H1 (cell line): ENCODE measurements at regions of chr3 and their contacts with region 1.

Region 1: GRCh38 chr3:128123538-128124368 is at the start of gene RUVBL1:
- DNase-seq: peak; percentile 90 to 94
- H3K4me3 ChIP-seq: peak within 1 kb of the TSS; percentile 93 to 96 (median 95)
- H3K27ac ChIP-seq: peak within 1 kb of the TSS; percentile 95
- H3K4me1 ChIP-seq: no peaks in the 10 kb centered on the region; a peak in 2 of 7 replicates
- H3K27me3 ChIP-seq: peaks cover 0 to 4% (median 0%) of the 10 kb centered on the region in 4 experiments; a peak in 1 of 7 replicates
- CTCF ChIP-seq: no peak
- EP300 ChIP-seq: no peak
- POLR2A ChIP-seq: peak; percentile 85 to 90
- RAD21 ChIP-seq: no peak
- total RNA-seq, gene RUVBL1: 131 and 135 TPM in 2 replicates

Region 2: DNA sequence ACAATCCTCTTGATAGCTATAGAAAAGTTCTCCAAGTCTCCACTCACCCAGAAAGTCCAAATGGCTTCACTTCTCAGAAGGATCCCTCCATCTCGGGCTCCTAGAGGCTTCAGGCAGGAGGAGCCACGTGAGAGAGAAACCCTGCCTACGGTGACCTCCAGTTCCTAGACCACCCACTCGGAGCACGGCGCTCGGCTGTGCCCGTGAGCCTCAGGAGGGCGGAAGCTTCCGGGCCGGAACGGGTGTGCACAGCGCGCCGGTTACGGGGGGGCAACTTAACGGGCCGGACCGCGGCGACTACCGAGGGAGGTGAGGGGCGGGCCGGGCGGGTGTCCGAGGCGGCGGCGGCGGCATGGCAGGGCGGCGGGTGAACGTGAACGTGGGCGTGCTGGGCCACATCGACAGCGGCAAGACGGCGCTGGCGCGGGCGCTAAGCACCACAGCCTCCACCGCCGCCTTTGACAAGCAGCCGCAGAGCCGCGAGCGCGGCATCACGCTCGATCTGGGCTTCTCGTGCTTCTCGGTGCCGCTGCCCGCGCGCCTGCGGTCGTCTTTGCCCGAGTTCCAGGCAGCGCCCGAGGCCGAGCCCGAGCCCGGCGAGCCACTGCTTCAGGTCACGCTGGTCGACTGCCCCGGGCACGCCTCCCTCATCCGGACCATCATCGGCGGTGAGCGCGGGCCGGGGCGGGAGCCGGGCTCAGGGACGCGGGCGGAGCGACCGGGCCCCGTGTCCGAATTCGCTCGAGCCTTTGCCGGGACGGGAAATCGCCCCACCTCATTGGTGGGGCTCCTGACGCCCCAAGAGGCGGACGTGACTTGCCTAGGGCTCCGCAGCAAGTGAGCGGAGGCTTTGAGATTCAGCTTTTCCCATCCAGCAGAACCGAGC is 29.6 kb after region 1 on chr3 and contains the start of gene EEFSEC:
- CTCF ChIA-PET with region 1: interaction called, 3 read pairs
- POLR2A ChIA-PET with region 1: interaction called, 11 read pairs
- DNase-seq: peak in 1 of 2 experiments; percentile 92
- H3K4me3 ChIP-seq: peak within 1 kb of the TSS; percentile 77 to 92 (median 84)
- H3K27ac ChIP-seq: no peak within 1 kb of the TSS
- H3K4me1 ChIP-seq: peaks cover 0 to 1% (median 0%) of the 10 kb centered on the region in 4 experiments; a peak in 1 of 7 replicates
- H3K27me3 ChIP-seq: no peaks in the 10 kb centered on the region; a peak in 1 of 7 replicates
- CTCF ChIP-seq: no peak
- EP300 ChIP-seq: peak in 1 of 2 experiments; percentile 55; a peak in 1 of 3 replicates
- POLR2A ChIP-seq: peak; percentile 45 to 59
- RAD21 ChIP-seq: no peak
- total RNA-seq, gene EEFSEC: 13.1 and 13.8 TPM in 2 replicates